A549 (cell line): ENCODE measurements at regions of chr22 and their contacts with region 1.

Region 1: DNA sequence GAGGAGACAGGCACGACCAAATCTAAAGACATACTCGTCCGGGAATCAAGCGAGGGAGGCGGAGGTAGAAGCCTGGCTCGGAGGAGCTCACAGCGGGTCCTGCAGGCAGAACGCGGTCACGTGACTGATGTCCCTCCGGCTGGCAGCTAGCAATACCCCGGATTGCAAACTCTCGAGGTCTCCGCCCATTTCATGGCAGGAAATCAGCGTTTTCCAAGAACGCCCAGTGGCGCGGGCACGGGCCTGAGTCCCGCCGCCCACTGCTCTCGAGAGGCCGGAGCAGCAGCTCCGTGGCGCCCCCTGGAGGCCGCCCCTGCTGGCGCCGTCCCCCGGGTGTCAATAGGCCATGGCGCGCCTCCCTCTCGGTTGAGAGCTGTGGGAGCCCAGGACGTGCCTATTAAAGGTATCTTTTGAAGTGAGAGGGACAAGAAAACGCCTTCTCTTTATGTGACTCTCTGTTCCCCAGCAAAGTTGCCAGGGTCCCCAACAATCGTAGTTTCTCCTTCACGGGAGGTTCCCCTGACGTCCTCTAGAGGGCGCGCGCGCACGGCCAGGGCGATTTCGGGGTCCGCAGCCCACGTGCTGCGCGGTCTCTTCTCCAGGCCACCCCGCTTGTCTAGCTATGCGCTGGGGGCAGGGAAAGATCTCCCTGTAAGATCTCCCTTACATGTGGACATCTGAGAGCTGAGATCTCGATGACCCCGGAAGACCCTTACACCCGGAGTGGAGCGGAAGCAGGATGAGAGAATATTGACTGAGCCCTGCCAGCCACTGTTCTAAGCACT is 37.3 kb upstream of the RBFOX2 start:
- DNase-seq: peak; percentile 89 to 92
- ATAC-seq: peak; percentile 94 to 96
- H3K4me3 ChIP-seq: peak overlapping the region; percentile 44
- H3K27ac ChIP-seq: peak overlapping the region; percentile 88 to 92
- H3K4me1 ChIP-seq: peaks cover 5% of the 10 kb centered on the region; the same call in 2 of the 3 replicates
- CTCF ChIP-seq: peak; percentile 100
- EP300 ChIP-seq: no peak
- POLR2A ChIP-seq: peak; percentile 62
- RAD21 ChIP-seq: peak; percentile 45 to 86

Region 2: DNA sequence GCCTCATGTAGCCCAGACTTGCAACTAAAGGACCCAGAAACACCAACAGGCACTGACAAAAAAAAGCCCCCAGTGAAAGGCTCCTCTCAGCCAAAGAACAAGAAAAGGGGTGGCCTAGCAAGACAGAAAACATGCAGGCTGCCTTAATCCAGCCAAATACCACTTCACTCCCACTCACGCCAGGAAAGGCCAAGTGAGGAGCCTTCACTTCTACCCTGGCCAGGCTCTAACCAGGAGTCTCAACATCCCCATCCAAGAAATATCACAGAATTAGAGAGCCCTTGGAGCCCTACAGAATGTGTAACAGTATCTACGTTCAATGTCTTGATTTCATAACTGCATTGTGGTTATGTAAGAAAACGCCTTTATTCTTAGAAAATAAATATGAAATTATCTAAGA is 199.3 kb before region 1 on chr22:
- CTCF ChIA-PET with region 1: no interaction called
- POLR2A ChIA-PET with region 1: no interaction called
- DNase-seq: no peak
- ATAC-seq: no peak
- H3K4me3 ChIP-seq: no peak overlapping the region
- H3K27ac ChIP-seq: no peak overlapping the region
- H3K4me1 ChIP-seq: peaks cover 18% of the 10 kb centered on the region; the same call in 2 of the 3 replicates
- CTCF ChIP-seq: no peak
- EP300 ChIP-seq: no peak
- POLR2A ChIP-seq: no peak
- RAD21 ChIP-seq: no peak

Region 3: GRCh38 chr22:35930933-35931332 is 135.0 kb before region 1 on chr22:
- CTCF ChIA-PET with region 1: interaction called, 85 read pairs
- POLR2A ChIA-PET with region 1: no interaction called
- DNase-seq: peak; percentile 29 to 69
- ATAC-seq: peak; percentile 85 to 88; a peak in 5 of 6 replicates
- H3K4me3 ChIP-seq: no peak overlapping the region
- H3K27ac ChIP-seq: no peak overlapping the region
- H3K4me1 ChIP-seq: no peaks in the 10 kb centered on the region
- CTCF ChIP-seq: peak; percentile 56
- EP300 ChIP-seq: no peak
- POLR2A ChIP-seq: no peak
- RAD21 ChIP-seq: peak; percentile 65 to 72

Region 4: GRCh38 chr22:36028646-36029405 is 37.1 kb before region 1 on chr22 and contains the start of gene RBFOX2:
- CTCF ChIA-PET with region 1: interaction called, 41 read pairs
- POLR2A ChIA-PET with region 1: interaction called, 27 read pairs
- DNase-seq: peak; percentile 88 to 91
- ATAC-seq: peak; percentile 88 to 96
- H3K4me3 ChIP-seq: peak within 1 kb of the TSS; percentile 98
- H3K27ac ChIP-seq: peak within 1 kb of the TSS; percentile 94 to 99
- H3K4me1 ChIP-seq: peaks cover 12% of the 10 kb centered on the region; the same call in 2 of the 3 replicates
- CTCF ChIP-seq: no peak
- EP300 ChIP-seq: no peak
- POLR2A ChIP-seq: peak; percentile 48
- RAD21 ChIP-seq: no peak
- polyA plus RNA-seq, gene RBFOX2: 65.3 and 77.7 TPM in 2 replicates

Region 5: GRCh38 chr22:36081023-36081431 is 15.1 kb after region 1 on chr22:
- CTCF ChIA-PET with region 1: interaction called, 66 read pairs
- POLR2A ChIA-PET with region 1: no interaction called
- DNase-seq: no peak
- ATAC-seq: no peak
- H3K4me3 ChIP-seq: no peak overlapping the region
- H3K27ac ChIP-seq: no peak overlapping the region
- H3K4me1 ChIP-seq: no peaks in the 10 kb centered on the region
- CTCF ChIP-seq: no peak
- EP300 ChIP-seq: no peak
- POLR2A ChIP-seq: no peak
- RAD21 ChIP-seq: no peak

Region 6: GRCh38 chr22:36110306-36110881 is 44.4 kb after region 1 on chr22:
- CTCF ChIA-PET with region 1: interaction called, 18 read pairs
- POLR2A ChIA-PET with region 1: no interaction called
- DNase-seq: no peak
- ATAC-seq: no peak
- H3K4me3 ChIP-seq: no peak overlapping the region
- H3K27ac ChIP-seq: no peak overlapping the region
- H3K4me1 ChIP-seq: no peaks in the 10 kb centered on the region
- CTCF ChIP-seq: no peak
- EP300 ChIP-seq: no peak
- POLR2A ChIP-seq: no peak
- RAD21 ChIP-seq: no peak